ENCODE measurements at regions of chr17 and their contacts with region 1.

Region 1: DNA sequence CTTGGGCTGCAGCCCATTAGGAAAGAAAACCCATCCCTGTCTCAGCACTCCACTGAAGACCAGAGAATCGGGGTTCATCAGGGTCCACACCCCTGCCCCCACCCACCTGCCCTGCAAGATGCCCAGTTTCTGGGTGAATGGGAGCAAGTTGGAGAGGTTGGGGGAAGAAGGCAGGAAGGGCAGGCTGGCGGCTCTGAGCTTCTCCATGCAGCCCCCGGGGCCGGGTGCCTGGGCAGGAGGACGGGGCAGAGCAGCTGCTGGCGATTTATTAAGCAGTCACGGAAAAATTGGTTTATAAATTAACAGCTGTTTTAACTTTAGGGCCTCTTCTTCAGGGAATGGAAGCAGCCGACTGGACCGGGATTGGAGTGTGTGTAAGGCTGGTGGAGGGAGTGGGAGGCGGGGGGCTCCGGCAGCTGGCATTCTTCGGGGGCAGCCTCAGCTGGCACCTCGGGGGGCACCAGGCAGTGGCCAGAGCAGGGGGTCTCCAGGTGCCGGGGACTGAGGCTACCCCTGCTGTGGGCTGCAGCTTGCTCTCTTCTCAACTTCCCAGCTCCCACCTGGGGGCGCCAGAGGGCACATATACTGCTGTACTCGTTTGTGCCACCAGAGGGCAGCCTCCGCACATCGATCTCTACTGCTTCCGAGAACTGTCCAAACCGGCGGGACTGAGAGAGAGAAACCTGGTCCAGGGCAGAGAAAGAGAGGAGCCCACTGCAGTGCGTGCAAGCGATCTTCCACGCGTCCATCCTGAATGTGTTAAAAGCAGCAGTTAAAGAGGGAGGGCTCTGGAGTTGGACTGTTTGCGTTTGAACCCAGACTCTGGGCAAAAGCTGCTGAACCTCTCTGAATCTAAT is 5.0 kb upstream of the PPP1R1B start:
- DNase-seq: peak; percentile 85
- H3K4me3 Mint-ChIP-seq: peak overlapping the region; percentile 54
- H3K27ac Mint-ChIP-seq: peak overlapping the region; percentile 48
- H3K4me1 Mint-ChIP-seq: peaks cover 18% of the 10 kb centered on the region
- H3K27me3 Mint-ChIP-seq: peaks cover 42% of the 10 kb centered on the region

Region 2: DNA sequence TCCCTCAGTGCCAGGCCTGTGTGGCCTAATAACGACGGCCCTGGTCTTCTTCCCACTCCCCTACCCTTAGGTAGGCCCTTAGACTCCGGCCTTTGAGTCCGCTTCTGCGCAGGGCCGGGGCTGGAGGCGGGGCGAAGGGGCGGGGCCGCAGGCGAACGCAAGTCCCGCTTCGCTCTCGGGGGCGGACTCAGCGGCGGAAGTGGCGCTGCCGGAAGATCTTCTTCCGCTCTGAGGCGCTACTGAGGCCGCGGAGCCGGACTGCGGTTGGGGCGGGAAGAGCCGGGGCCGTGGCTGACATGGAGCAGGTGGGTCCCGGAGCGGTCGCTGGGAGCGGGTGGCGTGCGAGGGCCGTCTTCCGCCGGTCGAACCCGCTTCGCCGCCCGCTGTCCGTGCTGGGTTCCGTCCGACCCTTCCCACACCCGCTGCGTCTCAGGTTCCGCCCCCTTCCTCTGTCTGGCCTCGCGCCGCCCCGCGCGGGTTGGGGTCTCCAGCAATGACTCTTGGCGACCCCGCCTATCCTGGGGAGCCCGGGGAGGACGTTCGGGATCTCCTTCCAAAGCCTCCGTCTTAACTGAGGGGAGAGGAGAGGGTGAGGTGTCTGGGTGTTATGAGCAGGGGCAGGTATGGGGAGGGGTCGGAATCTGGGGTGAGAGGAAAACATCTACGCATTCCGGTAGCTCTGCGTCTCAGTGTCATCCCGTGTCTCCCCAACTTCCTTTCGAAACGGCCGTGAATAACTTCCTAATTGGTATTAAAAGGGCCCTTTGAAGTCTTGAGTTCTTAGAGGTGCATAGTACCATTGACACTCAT is 15.4 kb after region 1 on chr17 and contains the start of gene STARD3:
- intact Hi-C with region 1: loop called (anchors 1 kb)
- DNase-seq: peak; percentile 86
- H3K4me3 Mint-ChIP-seq: peak within 1 kb of the TSS; percentile 92
- H3K27ac Mint-ChIP-seq: peak within 1 kb of the TSS; percentile 71
- H3K4me1 Mint-ChIP-seq: peaks cover 24% of the 10 kb centered on the region
- H3K27me3 Mint-ChIP-seq: no peaks in the 10 kb centered on the region
- total RNA-seq, gene STARD3: 51.5 and 54.4 TPM in 2 replicates

Region 3: DNA sequence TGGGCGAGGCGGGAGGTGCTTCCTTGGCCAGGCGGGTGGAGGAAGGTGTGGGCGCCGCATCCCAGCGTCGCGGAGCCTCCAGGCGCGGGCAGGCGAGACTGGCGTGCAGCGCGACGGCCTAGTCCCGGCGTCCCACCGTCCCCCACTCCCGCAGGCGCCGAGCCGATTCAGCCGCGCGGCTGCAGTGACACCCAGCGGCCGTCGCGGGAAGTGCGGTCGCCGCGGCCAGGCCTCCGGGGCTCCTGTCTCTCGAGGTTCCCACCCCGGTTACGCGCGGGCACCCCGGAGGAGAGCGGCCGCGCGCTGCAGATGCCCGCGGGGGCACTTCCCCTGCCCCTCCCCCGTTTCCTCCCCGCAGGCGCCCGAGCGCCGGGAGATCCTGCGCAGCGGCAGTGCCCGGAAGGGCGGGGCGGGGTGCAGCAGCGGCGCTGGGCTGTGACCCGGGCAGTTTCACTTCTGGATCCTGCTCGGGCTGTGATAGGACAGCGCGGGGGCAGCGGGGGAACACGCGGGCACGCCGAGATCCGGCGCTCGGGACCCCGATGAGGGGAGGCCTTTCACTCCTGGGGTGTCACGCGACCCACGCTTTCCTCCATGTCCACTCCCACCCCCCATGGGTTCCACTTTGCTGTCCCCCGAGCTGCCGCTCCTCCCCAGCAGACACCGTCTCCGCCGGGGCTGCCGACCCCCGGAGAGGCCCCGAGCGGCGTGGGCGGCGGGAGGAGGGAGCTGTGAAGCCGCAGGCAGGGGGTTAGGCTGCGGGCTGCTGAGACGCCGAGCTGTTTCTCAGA is 132.6 kb after region 1 on chr17:
- intact Hi-C with region 1: loop called (anchors 1 kb)
- DNase-seq: peak; percentile 98
- H3K4me3 Mint-ChIP-seq: peak overlapping the region; percentile 19
- H3K27ac Mint-ChIP-seq: peak overlapping the region; percentile 56
- H3K4me1 Mint-ChIP-seq: peaks cover 52% of the 10 kb centered on the region
- H3K27me3 Mint-ChIP-seq: no peaks in the 10 kb centered on the region

Region 4: DNA sequence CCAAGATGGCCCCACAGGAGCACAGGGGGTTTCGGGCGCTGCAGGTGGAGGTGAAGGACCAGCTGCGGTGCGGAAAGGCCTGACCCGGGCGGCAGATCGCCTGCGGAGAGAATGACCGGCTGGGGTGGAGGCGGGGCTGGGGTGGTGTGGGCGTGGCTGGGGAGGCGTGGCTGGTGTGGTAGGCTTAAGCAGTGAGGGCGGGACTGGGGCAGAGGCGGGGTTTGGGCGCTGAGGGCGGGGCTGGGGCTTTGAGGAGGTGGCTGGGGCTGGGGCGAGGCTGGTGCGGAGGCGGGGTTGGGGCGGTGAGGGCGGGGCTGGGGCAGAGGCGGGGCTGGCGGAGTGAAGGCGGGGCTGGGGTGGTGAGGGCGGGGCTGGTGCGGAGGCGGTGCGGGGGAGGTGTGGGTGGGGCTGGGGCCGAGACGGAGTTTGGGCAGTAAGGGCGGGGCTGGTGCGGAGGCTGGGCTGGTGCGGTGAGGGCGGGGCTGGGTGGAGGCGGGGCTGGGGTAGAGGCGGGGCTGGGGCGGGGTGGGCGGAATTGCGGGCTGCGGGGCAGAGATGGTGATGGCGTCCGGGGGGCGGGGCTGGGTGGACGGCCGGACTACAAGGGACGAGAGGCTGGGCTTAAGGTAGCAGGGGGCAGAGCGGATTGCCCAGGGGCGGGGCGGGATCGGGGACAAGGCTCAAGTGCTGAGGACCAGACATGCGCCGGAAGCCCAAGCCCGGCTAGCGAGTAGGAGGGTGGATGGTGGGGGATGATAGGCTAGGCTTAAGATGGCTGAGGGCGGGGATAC is 331.1 kb after region 1 on chr17:
- intact Hi-C with region 1: loop called (anchors 10 kb)
- DNase-seq: peak; percentile 84
- H3K4me3 Mint-ChIP-seq: peak overlapping the region; percentile 78
- H3K27ac Mint-ChIP-seq: peak overlapping the region; percentile 68
- H3K4me1 Mint-ChIP-seq: peaks cover 8% of the 10 kb centered on the region
- H3K27me3 Mint-ChIP-seq: peaks cover 4% of the 10 kb centered on the region

Measured in activated T-helper 2 cell treated with anti-CD3 and anti-CD28 coated beads, Interferon-gamma antibody, Interleukin-2, Interleukin-4, amounts not matched to agents 10 μg/mL and 5 μg/mL and 100 μg/mL, durations not matched to agents 14 hours and 24 hours and 36 hours (primary cell).